ENCODE measurements at regions of chr18 and their contacts with region 1.

Region 1: GRCh38 chr18:79644006-79644665 is 35.5 kb upstream of the CTDP1 start:
- DNase-seq: peak; percentile 43 to 81
- ATAC-seq: peak; percentile 82 to 97 (median 95)
- H3K4me3 ChIP-seq: no peak overlapping the region
- H3K4me3 Mint-ChIP-seq: no peak overlapping the region
- H3K27ac ChIP-seq: no peak overlapping the region
- H3K27ac Mint-ChIP-seq: no peak overlapping the region
- H3K4me1 ChIP-seq: peaks cover 22% of the 10 kb centered on the region
- H3K4me1 Mint-ChIP-seq: peaks cover 0 to 5% of the 10 kb centered on the region in 2 donors
- H3K27me3 ChIP-seq: no peaks in the 10 kb centered on the region
- H3K27me3 Mint-ChIP-seq: peaks cover 11 to 24% of the 10 kb centered on the region in 2 donors
- CTCF ChIP-seq: peak; percentile 98

Region 2: DNA sequence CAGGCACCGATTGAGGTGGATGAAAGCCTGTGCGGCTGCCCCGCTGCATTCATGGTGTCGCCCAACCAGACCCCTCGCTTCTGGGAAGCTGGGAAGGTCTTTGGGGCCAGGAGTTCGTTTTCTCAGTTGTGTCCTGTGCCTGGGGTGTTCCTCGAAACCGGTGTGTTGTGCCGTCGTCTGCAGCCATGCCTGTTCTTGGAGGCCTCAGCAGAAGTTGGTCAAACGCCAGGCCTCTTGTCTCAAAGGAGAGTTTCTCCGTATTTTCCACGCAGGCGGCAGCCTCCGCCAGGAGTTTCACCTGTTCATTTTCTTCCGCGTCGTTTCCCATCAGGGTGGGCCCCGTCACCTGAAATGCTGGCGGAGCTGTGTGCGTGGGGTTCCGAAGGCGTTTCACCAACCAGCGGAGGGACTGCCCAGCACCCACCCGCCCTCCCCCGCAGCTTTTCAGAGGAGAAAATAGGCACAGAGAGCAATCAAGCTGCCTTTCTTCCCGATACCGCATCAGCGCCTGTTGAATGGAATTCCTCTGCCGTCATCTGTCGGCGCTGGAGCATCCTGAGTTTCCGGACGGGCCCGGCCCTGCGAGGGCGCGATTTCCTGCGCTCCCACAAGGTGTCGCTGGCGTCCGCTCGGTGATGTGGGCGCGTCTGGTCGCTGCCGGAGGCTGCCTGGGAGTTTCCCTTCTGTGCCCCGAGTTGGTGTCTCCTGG is 265.4 kb before region 1 on chr18:
- intact Hi-C with region 1: loop called (anchors 1 kb)
- DNase-seq: peak; percentile 75 to 92
- ATAC-seq: peak; percentile 85 to 98 (median 94)
- H3K4me3 ChIP-seq: no peak overlapping the region
- H3K4me3 Mint-ChIP-seq: no peak overlapping the region
- H3K27ac ChIP-seq: no peak overlapping the region
- H3K27ac Mint-ChIP-seq: peak overlapping the region; percentile 41 to 66
- H3K4me1 ChIP-seq: peaks cover 8% of the 10 kb centered on the region
- H3K4me1 Mint-ChIP-seq: peaks cover 5 to 7% of the 10 kb centered on the region in 2 donors
- H3K27me3 ChIP-seq: no peaks in the 10 kb centered on the region
- H3K27me3 Mint-ChIP-seq: no peaks in the 10 kb centered on the region
- CTCF ChIP-seq: peak; percentile 93

Region 3: GRCh38 chr18:79585395-79586370 is 58.5 kb before region 1 on chr18:
- intact Hi-C with region 1: loop called (anchors 2 kb)
- DNase-seq: no peak
- ATAC-seq: no peak
- H3K4me3 ChIP-seq: no peak overlapping the region
- H3K4me3 Mint-ChIP-seq: no peak overlapping the region
- H3K27ac ChIP-seq: no peak overlapping the region
- H3K27ac Mint-ChIP-seq: no peak overlapping the region
- H3K4me1 ChIP-seq: no peaks in the 10 kb centered on the region
- H3K4me1 Mint-ChIP-seq: no peaks in the 10 kb centered on the region
- H3K27me3 ChIP-seq: no peaks in the 10 kb centered on the region
- H3K27me3 Mint-ChIP-seq: peaks cover 0 to 3% of the 10 kb centered on the region in 2 donors
- CTCF ChIP-seq: no peak

Measured in natural killer cell (primary cell).